K562 (cell line): ENCODE measurements at regions of chr7 and their contacts with region 1.

Region 1: DNA sequence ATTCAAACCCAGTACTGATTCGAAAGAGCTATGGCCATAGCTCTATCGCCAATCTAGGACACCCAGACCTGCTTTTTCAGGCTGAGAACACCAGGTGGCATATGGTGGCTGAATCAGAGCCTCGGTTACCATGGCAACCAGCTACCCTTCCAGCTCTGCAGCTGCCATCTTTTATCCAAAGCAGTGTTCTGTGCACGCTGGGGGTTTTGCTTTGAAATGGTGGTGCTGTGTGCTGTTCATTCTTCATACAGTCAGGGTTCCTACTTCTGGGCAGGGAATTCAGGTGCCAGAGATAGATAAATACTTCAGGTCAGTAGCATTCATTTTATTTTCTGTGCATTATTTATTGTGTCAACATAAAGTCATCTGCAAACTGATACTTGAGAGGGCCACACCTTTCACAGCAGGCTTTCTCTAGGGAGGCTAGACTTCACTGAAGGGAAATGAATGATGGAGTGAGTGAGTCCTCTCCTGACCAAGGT is 85.4 kb downstream of the AKR1D1 start:
- DNase-seq: peak; percentile 94 to 98 (median 96)
- ATAC-seq: peak; percentile 100
- H3K4me3 ChIP-seq: no peak overlapping the region
- H3K27ac ChIP-seq: no peak overlapping the region
- H3K4me1 ChIP-seq: no peaks in the 10 kb centered on the region
- H3K27me3 ChIP-seq: no peaks in the 10 kb centered on the region
- CTCF ChIP-seq: peak; percentile 83 to 96 (median 91)
- EP300 ChIP-seq: 0 out of 2 replicates have a peak, but pooled peaks have one; percentile 7
- POLR2A ChIP-seq: no peak
- RAD21 ChIP-seq: peak; percentile 96 to 97

Region 2: DNA sequence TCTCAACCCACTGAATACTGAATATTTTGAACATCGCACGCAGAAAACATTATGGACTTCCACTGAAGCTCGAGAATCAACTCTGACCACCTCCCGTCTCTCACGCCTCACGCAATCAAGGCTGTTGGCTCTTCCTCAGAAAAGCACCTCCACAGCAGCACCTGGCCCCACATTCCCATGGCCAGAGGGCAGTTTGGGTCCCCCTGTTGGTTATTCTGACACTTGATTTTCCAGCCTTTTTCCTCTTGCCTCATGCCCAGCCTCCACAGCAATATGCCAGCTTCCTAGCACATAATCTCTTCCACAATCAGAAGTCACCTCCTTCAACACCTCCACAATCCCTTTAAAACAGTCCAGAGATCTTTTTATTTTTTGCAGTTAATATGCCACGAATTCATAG is 483.6 kb after region 1 on chr7:
- CTCF ChIA-PET with region 1: no interaction called
- POLR2A ChIA-PET with region 1: no interaction called
- in situ Hi-C with region 1: no loop called
- intact Hi-C with region 1: loop called (anchors 2 kb)
- DNase-seq: peak in 2 of 4 experiments; percentile 30 to 49
- ATAC-seq: peak; percentile 69
- H3K4me3 ChIP-seq: no peak overlapping the region
- H3K27ac ChIP-seq: no peak overlapping the region
- H3K4me1 ChIP-seq: no peaks in the 10 kb centered on the region
- H3K27me3 ChIP-seq: peaks cover 4 to 32% of the 10 kb centered on the region in 2 experiments; a peak in 3 of 5 replicates
- CTCF ChIP-seq: peak; percentile 44 to 58 (median 57)
- EP300 ChIP-seq: no peak
- POLR2A ChIP-seq: no peak
- RAD21 ChIP-seq: peak; percentile 17 to 58; a peak in 3 of 4 replicates

Region 3: GRCh38 chr7:138865843-138866242 is 704.2 kb after region 1 on chr7:
- CTCF ChIA-PET with region 1: no interaction called
- POLR2A ChIA-PET with region 1: no interaction called
- in situ Hi-C with region 1: no loop called
- intact Hi-C with region 1: loop called (anchors 1 kb)
- DNase-seq: peak; percentile 40 to 59 (median 43)
- ATAC-seq: peak; percentile 77
- H3K4me3 ChIP-seq: no peak overlapping the region
- H3K27ac ChIP-seq: no peak overlapping the region
- H3K4me1 ChIP-seq: peaks cover 3 to 14% of the 10 kb centered on the region in 2 experiments; a peak in 4 of 5 replicates
- H3K27me3 ChIP-seq: peaks cover 42 to 70% of the 10 kb centered on the region in 2 experiments
- CTCF ChIP-seq: peak; percentile 74 to 89 (median 75)
- EP300 ChIP-seq: no peak
- POLR2A ChIP-seq: no peak
- RAD21 ChIP-seq: peak; percentile 71 to 82